Esophagus muscularis mucosa (tissue), 4 donors: ENCODE measurements at regions of chr19 and their contacts with region 1.

Region 1: DNA sequence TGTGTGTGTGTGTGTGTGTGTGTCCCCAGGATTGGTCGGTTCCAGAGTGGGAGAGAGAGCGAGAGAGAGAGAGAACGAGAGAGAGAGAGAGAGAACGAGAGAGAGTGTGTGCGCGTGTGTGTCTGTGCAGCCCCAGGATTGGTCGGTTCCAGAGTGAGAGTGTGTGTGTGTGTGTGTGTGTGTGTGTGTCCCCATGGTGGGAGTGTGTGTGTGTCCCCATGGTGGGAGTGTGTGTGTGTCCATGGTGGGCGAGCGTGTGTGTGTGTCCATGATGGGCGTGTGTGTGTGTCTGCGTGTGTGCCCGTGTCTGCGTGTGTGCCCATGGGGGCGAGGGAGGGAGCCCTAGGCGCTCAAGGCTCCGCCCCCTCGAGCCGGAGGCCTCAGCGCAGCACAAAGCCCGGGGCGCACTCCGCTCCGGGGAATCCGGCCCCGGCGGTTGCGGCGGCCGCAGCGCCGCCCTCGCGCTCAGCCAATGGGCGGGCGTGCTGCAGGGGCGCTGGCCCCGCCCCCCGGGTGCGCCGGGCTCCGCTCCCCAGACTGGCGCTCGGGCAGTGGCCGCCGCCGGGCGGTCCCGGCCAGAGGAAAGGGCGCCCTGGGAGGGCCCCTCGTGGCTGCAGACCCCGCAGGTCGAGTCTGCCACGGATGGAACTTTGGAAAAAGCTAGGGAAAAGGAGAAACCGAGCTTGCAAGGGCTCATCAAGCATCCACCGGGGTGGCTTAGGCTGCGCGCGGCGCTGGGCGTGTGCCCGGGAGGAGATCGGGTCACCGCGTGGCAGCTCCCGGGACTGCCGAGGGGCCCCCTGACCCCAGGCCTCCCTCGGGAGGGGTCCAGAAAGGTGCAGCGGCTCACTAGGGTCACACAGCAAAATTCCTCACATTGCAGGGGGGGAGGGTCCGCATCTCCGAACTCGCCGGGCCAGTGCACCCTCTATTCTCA is 96.2 kb downstream of the INSR start:
- DNase-seq: peak; percentile 97
- H3K4me3 ChIP-seq: peak overlapping the region; percentile 66 to 76 (median 70)
- H3K27ac ChIP-seq: peak overlapping the region; percentile 79 to 90 (median 87)
- H3K4me1 ChIP-seq: peaks cover 19 to 37% (median 26%) of the 10 kb centered on the region in 4 donors
- H3K27me3 ChIP-seq: no peaks in the 10 kb centered on the region
- CTCF ChIP-seq: peak in 2 of 3 experiments; percentile 28 to 51
- EP300 ChIP-seq: no peak
- POLR2A ChIP-seq: peak; percentile 11

Region 2: GRCh38 chr19:7159105-7159933 is 38.7 kb before region 1 on chr19:
- intact Hi-C with region 1: loop called (anchors 5 kb)
- DNase-seq: no peak
- H3K4me3 ChIP-seq: peak overlapping the region in 1 of 4 donors; percentile 16
- H3K27ac ChIP-seq: peak overlapping the region; percentile 74 to 83 (median 81)
- H3K4me1 ChIP-seq: peaks cover 9 to 23% (median 12%) of the 10 kb centered on the region in 4 donors
- H3K27me3 ChIP-seq: no peaks in the 10 kb centered on the region
- CTCF ChIP-seq: no peak
- EP300 ChIP-seq: no peak
- POLR2A ChIP-seq: no peak

Region 3: GRCh38 chr19:7177926-7178325 is 20.1 kb before region 1 on chr19:
- intact Hi-C with region 1: loop called (anchors 2 kb)
- DNase-seq: no peak
- H3K4me3 ChIP-seq: no peak overlapping the region
- H3K27ac ChIP-seq: peak overlapping the region; percentile 41 to 63 (median 54)
- H3K4me1 ChIP-seq: peaks cover 36 to 50% (median 49%) of the 10 kb centered on the region in 4 donors
- H3K27me3 ChIP-seq: no peaks in the 10 kb centered on the region
- CTCF ChIP-seq: no peak
- EP300 ChIP-seq: no peak
- POLR2A ChIP-seq: no peak

Region 4: GRCh38 chr19:7293795-7294570 is 96.0 kb after region 1 on chr19 and contains the start of gene INSR:
- intact Hi-C with region 1: loop called (anchors 1 kb)
- DNase-seq: peak; percentile 95
- H3K4me3 ChIP-seq: peak within 1 kb of the TSS; percentile 83 to 100 (median 100)
- H3K27ac ChIP-seq: peak within 1 kb of the TSS; percentile 90 to 94 (median 94)
- H3K4me1 ChIP-seq: peaks cover 18 to 55% (median 35%) of the 10 kb centered on the region in 4 donors
- H3K27me3 ChIP-seq: peaks cover 0 to 3% (median 0%) of the 10 kb centered on the region in 4 donors
- CTCF ChIP-seq: no peak
- EP300 ChIP-seq: no peak
- POLR2A ChIP-seq: peak; percentile 50
- total RNA-seq, gene INSR: 72.3 to 143 (median 92.5) TPM